ENCODE measurements at regions of chr10 and their contacts with region 1.

Region 1: DNA sequence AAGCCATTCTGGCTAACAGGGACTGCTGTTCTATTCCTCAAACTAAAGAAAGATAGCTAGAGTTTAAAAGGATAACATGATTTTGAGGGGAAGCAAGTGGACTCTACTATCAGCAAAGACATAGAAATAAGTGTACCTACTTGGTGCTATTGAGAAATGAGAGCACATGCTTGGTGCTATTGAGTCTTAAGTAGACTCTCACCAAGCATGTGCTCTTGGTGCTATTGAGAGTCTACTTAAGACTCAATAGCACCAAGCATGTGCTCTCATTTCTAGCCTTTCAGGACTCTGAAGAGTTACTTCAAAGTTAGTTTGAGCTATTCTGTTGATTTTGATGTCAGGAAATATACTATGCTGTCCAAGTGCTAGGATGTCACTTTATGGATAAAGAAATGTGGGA is 733.0 kb upstream of the ZWINT start:
- DNase-seq: no peak
- ATAC-seq: no peak

Region 2: DNA sequence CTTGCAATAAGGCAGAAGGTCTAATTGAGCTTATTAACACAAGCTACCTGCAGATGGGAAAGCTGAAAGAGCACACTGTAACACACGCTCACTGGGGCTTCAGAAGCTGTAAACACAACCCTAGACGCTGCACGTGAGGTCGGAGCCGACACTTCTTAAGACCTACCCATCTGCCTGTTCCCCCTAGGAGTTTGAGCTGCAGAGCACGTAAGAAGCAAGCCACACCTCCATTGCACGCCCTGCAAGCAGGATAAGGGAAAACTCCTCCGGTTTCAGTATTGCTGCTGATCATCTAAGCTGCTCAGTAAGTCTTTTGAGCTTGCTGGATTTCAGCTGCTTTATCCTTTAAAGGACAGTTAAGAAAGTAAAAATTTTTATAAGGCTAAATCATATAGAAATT is 489.0 kb before region 1 on chr10:
- intact Hi-C with region 1: no loop called
- DNase-seq: no peak
- ATAC-seq: no peak

Region 3: DNA sequence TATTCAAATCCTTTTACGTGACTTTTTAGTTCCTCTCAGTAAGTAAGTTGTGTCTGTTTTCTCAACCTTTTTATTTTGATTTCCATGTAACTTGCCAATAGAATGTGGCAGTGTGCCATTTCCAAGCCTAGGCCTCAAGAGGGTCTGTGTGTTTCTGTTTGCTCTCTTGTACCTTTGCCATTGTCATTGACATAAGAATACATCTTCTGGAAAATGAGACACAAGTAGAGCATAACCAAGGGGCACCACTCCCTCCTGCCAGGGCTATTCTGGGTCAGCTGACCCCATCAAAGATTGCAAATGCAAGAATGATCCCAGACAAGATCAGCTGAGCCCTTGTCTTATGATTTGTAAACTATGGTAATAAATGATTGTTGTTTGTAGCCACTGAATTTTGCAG is 649.6 kb after region 1 on chr10:
- intact Hi-C with region 1: loop called (anchors 10 kb)
- DNase-seq: no peak
- ATAC-seq: no peak